OCI-LY7 (cell line): ENCODE measurements at regions of chr1 and their contacts with region 1.

Region 1: DNA sequence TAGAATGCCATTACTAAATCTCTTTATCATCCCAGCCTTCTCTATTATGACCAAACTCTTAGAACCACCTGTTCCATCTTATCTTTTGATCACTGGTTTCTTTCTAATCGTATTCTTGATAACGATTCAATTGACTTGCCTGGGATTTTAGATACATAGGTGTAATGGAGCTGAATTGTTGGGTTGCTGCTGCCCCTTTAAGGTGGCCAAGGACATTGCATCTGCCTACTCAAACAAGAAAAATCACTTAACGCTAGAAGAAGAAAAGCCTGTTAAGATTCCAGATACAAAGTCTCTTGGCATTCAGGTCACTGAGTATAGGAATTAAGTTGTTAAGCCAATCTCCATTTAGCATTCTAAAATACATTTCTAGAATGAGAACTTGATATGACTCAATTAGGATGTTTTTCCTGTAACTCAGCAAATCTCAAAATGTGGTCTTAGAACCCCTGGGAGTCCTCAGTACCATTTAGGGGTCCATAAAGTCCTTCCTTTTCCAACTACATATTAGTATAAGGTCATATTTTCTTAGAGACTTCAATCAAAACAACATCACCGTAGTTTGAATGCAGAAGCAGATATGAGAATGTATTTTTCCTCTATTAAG is 12.4 kb downstream of the NEXN start:
- DNase-seq: peak; percentile 61
- H3K4me3 ChIP-seq: no peak overlapping the region
- H3K27ac ChIP-seq: no peak overlapping the region
- H3K4me1 ChIP-seq: no peaks in the 10 kb centered on the region
- CTCF ChIP-seq: peak; percentile 96

Region 2: GRCh38 chr1:76302711-76303339 is 1598.0 kb before region 1 on chr1:
- CTCF ChIA-PET with region 1: no interaction called
- POLR2A ChIA-PET with region 1: no interaction called
- intact Hi-C with region 1: no loop called
- DNase-seq: no peak
- H3K4me3 ChIP-seq: peak overlapping the region; percentile 19
- H3K27ac ChIP-seq: no peak overlapping the region
- H3K4me1 ChIP-seq: peaks cover 35% of the 10 kb centered on the region
- CTCF ChIP-seq: no peak

Region 3: DNA sequence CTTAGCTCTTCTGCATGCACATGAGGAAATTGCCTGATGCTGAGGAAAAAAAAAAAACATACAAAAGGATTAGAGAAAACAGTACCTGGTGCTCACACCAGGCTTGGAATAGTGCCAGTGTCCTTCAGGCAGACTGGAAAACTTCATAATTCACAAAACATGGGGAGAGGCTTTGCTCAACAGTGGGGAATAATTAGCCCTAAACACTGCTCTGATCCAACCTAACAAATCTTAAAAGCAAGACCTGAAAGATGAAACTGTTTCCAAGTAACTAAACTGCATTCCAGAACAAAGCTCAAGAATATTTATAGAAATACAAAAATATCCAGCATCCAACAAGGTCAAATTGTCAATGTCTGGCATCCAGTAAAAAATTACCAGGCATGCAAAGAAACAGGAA is 494.1 kb before region 1 on chr1:
- CTCF ChIA-PET with region 1: no interaction called
- POLR2A ChIA-PET with region 1: no interaction called
- intact Hi-C with region 1: loop called (anchors 5 kb)
- DNase-seq: no peak
- H3K4me3 ChIP-seq: no peak overlapping the region
- H3K27ac ChIP-seq: no peak overlapping the region
- H3K4me1 ChIP-seq: peaks cover under 1% of the 10 kb centered on the region
- CTCF ChIP-seq: no peak

Region 4: DNA sequence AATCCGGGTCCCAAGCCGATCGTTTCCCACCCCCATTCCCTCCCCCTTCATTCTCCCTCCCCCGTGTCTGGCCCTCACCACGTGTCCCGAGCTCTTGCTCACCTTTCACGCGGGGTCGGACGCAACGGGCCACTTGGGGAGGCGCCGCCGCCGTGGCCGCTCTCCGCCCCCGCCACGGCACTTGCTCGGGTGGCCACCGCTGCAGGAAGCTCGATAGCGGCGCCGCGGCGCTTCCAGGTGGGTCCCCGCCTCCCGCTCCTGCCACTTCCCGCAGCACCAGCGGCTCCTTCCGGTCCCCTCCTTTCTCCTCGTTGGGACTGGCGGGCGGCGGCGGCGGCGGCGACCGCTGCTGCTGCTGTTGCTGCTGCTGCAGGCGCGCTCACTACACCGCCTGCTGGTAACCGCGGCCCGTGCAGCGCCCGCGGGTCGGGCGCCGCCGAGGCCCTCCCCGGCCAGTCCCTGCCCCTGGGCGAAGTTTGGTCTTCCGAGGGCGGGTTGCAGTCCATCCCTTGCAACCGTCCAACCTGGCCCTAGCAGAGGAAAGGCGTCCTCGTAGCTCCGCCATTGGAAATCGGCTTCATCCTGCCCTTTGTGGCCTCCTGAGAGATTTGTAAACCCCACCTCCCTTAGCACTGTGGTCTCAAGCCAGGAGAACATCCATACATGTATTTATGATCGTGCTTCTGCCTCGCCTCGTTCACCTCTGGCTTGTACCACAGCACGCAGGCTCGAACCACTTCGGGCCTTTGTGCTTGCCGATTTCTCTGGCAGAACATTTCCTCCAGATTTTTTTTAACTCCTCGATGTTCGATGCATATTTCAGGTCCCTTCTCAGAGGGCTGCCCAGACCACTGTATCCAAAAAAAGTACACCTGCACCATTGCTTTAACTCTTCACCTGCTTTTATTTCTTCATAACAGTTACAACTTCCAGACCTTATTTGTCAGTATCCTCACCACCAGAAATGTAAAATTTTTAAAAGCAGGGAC is 217.3 kb before region 1 on chr1:
- CTCF ChIA-PET with region 1: no interaction called
- POLR2A ChIA-PET with region 1: interaction called, 4 read pairs
- intact Hi-C with region 1: loop called (anchors 5 kb)
- DNase-seq: peak; percentile 95
- H3K4me3 ChIP-seq: peak overlapping the region; percentile 98
- H3K27ac ChIP-seq: peak overlapping the region; percentile 87
- H3K4me1 ChIP-seq: peaks cover 41% of the 10 kb centered on the region
- CTCF ChIP-seq: peak; percentile 84

Region 5: GRCh38 chr1:77825131-77825709 is 75.6 kb before region 1 on chr1:
- CTCF ChIA-PET with region 1: no interaction called
- POLR2A ChIA-PET with region 1: interaction called, 5 read pairs
- intact Hi-C with region 1: loop called (anchors 1 kb)
- DNase-seq: peak; percentile 88
- H3K4me3 ChIP-seq: no peak overlapping the region
- H3K27ac ChIP-seq: peak overlapping the region; percentile 70
- H3K4me1 ChIP-seq: peaks cover 38% of the 10 kb centered on the region
- CTCF ChIP-seq: peak; percentile 84

Region 6: GRCh38 chr1:78019018-78019417 is 118.2 kb after region 1 on chr1:
- CTCF ChIA-PET with region 1: no interaction called
- POLR2A ChIA-PET with region 1: no interaction called
- intact Hi-C with region 1: no loop called
- DNase-seq: no peak
- H3K4me3 ChIP-seq: no peak overlapping the region
- H3K27ac ChIP-seq: no peak overlapping the region
- H3K4me1 ChIP-seq: no peaks in the 10 kb centered on the region
- CTCF ChIP-seq: no peak

Region 7: GRCh38 chr1:78323311-78323710 is 422.5 kb after region 1 on chr1:
- CTCF ChIA-PET with region 1: no interaction called
- POLR2A ChIA-PET with region 1: no interaction called
- intact Hi-C with region 1: no loop called
- DNase-seq: no peak
- H3K4me3 ChIP-seq: no peak overlapping the region
- H3K27ac ChIP-seq: no peak overlapping the region
- H3K4me1 ChIP-seq: no peaks in the 10 kb centered on the region
- CTCF ChIP-seq: no peak

Region 8: DNA sequence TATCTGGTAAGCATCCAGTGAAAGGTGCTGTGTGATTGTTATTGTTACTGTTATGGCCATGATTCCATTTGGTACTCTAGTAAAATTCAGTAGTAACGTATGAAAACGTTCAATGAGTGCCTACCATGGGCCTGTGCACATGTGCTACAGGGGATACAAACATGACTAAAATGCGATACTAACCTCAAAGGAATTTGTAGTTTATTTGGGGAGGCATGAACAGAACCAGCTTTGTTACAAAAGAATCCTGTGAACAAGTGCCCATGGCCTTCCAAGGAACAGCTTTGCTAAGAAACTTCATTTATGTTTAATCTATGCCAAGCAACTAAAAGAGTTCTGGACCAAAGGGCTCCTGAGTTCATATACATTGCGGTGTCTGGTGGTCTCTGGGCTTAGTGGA is 618.7 kb after region 1 on chr1:
- CTCF ChIA-PET with region 1: no interaction called
- POLR2A ChIA-PET with region 1: no interaction called
- intact Hi-C with region 1: no loop called
- DNase-seq: no peak
- H3K4me3 ChIP-seq: no peak overlapping the region
- H3K27ac ChIP-seq: no peak overlapping the region
- H3K4me1 ChIP-seq: no peaks in the 10 kb centered on the region
- CTCF ChIP-seq: no peak